ENCODE measurements at regions of chr11 and their contacts with region 1.

Region 1: DNA sequence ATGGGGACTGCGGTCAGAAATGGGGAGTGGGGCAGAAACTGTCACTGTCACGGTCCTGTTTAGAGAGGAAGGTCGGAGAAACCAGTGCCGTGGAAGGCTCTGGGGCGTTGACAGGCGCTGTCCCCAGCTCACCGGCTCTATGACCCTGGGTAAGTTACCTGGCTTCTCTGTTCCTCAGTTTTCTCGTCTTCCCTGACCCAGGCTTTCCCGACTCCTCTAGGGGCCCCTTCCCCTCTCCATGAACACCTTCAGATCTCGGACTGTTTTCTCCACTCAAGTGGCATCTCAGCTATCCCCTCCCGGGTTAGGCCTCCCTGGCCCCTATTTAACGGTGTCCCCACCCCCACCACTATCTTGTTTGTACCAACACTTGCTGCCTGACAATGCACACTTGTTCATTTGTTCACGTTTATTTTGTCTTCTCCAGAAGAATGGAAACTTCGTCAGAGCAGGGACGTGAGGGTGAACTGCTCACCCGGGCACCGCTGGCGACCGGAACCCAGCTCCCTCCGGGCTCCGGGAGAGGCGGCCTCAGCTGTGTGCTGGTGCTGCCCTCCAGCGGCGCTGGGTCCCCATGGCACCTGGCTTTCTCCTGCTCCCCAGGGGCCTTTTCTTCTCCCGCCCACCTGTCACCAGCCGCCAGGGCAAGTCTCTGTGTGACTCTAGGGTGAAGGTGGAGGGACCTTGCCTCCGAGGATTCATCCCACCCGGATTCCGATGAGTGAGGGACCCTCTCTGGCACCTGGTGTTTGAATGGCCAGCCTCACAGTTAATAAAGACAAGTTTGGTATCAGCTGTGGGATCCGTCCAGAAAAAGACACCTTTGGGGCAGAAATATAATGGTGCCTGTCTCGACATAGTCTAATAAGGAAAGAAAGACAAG is 33.1 kb upstream of the SLC35C1 start:
- DNase-seq: peak; percentile 77 to 98 (median 87)

Region 2: GRCh38 chr11:45102810-45103621 is 668.8 kb before region 1 on chr11:
- intact Hi-C with region 1: loop called (anchors 10 kb)
- DNase-seq: peak in 5 of 10 donors; percentile 59 to 92 (median 65)

Region 3: GRCh38 chr11:45339729-45340519 is 431.9 kb before region 1 on chr11:
- intact Hi-C with region 1: loop called (anchors 1 kb)
- DNase-seq: peak; percentile 78 to 98 (median 92)

Region 4: GRCh38 chr11:45371251-45372115 is 400.3 kb before region 1 on chr11:
- intact Hi-C with region 1: loop called (anchors 1 kb)
- DNase-seq: peak; percentile 70 to 96 (median 82)

Region 5: DNA sequence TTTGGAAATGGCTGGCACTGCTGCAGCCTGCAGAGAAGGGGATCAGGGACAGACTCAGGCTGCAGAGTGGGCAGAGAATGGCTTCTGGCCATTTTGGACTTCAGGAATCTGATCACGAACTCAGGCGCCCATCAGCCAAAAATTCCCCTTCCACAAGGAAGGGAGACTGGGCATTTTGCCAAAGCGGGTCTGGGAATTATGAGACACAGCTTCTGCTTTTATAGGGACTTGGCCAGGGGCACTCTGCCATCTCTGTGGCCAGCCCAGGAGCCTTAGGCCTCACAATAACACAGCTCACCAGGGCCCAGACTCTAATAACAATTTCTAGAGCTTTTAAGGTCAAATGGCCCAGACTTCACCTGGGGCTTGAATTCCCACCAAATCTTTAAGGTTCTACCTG is 181.1 kb before region 1 on chr11:
- intact Hi-C with region 1: no loop called
- DNase-seq: peak in 6 of 10 donors; percentile 21 to 67 (median 26)

Region 6: DNA sequence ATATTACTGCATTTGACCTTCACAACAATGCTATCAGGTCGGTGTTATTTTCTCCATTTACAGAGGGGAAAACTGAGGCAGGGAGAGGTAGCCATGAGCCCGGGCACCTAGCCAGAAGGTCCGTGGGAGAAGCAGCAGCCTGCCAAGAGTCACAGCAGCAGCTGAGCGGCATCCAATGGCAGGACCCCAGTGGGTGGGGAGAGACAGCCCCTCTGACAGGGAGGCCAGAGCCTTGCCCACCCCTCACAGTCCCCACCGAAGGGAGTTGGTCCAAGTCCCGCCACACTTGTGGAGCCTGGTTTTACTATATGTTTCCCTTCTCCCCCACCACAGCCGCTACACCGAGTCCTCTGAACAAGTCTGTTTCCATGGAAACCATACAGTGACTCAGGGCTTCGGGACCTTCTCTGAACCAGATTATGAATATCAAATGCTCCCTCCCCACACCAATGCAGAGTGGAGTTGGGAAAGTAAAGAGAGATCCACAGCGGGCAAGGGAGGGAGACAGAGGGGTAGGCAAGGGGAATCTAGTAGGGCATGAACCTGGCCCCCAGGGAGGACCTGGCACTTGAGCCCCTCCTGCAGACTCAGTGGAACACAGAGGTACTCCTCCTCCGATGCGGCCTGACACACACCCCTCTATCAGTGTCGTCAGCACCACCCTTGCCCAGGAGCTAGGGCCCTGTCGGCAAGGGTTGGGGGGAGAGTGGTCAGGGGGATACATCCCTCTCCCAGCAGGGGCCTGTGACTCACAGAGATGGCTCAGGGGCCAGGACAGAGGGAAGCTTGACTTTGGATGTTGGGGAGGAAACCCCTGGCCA is 108.9 kb before region 1 on chr11:
- intact Hi-C with region 1: loop called (anchors 5 kb)
- DNase-seq: peak in 4 of 10 donors; percentile 35 to 87 (median 75)

Region 7: GRCh38 chr11:45724145-45724544 is 47.7 kb before region 1 on chr11:
- intact Hi-C with region 1: no loop called
- DNase-seq: no peak

Region 8: DNA sequence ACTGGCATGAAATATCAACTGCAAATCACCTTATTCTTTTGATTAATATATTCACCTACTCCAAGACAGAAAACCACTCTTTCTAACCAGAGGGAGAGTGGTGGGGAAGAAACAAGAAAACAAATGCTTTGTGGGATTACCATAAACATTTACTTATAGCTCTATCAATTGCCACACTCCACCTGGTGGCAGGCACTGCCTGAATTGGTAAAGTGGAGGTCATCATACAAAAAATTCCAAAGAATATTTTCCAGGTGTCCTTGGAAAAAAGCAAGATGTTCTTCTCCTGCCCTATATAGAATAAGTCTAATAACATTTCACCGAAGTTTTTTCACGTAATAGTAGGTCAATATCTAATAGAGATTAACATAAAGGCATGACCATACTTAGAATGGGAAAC is 304.1 kb after region 1 on chr11:
- intact Hi-C with region 1: no loop called
- DNase-seq: no peak